CD8-positive, alpha-beta T cell (primary cell): ENCODE measurements at regions of chr22 and their contacts with region 1.

Region 1: GRCh38 chr22:30159561-30160353 is 79.5 kb downstream of the HORMAD2 start:
- DNase-seq: no peak
- ATAC-seq: no peak
- H3K4me3 ChIP-seq: no peak overlapping the region
- H3K4me3 Mint-ChIP-seq: no peak overlapping the region
- H3K27ac ChIP-seq: no peak overlapping the region
- H3K27ac Mint-ChIP-seq: no peak overlapping the region
- H3K4me1 ChIP-seq: no peaks in the 10 kb centered on the region
- H3K4me1 Mint-ChIP-seq: peaks cover 6% of the 10 kb centered on the region
- H3K27me3 ChIP-seq: no peaks in the 10 kb centered on the region
- H3K27me3 Mint-ChIP-seq: no peaks in the 10 kb centered on the region
- CTCF ChIP-seq: no peak

Region 2: GRCh38 chr22:30089655-30089974 is 70.1 kb before region 1 on chr22:
- CTCF ChIA-PET with region 1: no interaction called
- POLR2A ChIA-PET with region 1: no interaction called
- intact Hi-C with region 1: no loop called
- DNase-seq: no peak
- ATAC-seq: no peak
- H3K4me3 ChIP-seq: no peak overlapping the region
- H3K4me3 Mint-ChIP-seq: no peak overlapping the region
- H3K27ac ChIP-seq: no peak overlapping the region
- H3K27ac Mint-ChIP-seq: no peak overlapping the region
- H3K4me1 ChIP-seq: peaks cover 5% of the 10 kb centered on the region
- H3K4me1 Mint-ChIP-seq: peaks cover 7% of the 10 kb centered on the region
- H3K27me3 ChIP-seq: no peaks in the 10 kb centered on the region
- H3K27me3 Mint-ChIP-seq: peaks cover 15% of the 10 kb centered on the region
- CTCF ChIP-seq: no peak

Region 3: DNA sequence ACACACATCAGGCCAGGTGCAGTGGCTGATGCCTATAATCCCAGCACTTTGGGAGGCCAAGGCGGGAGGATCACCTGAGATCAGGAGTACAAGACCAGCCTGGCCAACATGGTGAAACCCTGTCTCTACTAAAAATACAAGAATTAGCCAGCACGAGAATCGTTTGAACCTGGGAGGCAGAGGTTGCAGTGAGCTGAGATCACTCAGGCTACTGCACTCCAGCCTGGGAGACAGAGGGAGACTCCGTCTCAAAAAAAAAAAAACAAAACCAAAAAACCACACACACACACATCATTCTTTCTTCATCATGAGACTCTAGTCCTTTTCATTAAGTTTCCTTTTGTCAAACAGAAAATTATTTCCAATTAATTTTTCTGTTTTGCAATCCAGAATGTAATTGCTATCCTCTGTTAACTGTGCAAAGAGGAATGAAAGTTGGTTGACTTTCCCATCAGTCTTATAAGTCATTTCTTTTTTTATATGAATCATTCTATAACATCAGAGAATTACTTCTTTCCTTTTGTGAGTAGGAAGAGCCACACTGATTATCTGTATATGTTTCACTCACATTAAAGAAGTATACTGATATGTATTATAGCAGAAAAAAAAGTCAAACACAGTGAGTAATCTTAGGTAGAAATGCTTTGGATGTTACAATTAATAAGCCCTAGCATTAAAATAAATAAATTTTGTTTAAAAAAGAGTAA is 27.3 kb before region 1 on chr22:
- CTCF ChIA-PET with region 1: no interaction called
- POLR2A ChIA-PET with region 1: no interaction called
- intact Hi-C with region 1: no loop called
- DNase-seq: no peak
- ATAC-seq: no peak
- H3K4me3 ChIP-seq: no peak overlapping the region
- H3K4me3 Mint-ChIP-seq: no peak overlapping the region
- H3K27ac ChIP-seq: no peak overlapping the region
- H3K27ac Mint-ChIP-seq: no peak overlapping the region
- H3K4me1 ChIP-seq: no peaks in the 10 kb centered on the region
- H3K4me1 Mint-ChIP-seq: no peaks in the 10 kb centered on the region
- H3K27me3 ChIP-seq: no peaks in the 10 kb centered on the region
- H3K27me3 Mint-ChIP-seq: peaks cover 5% of the 10 kb centered on the region
- CTCF ChIP-seq: no peak

Region 4: GRCh38 chr22:30188911-30189310 is 29.2 kb after region 1 on chr22:
- CTCF ChIA-PET with region 1: no interaction called
- POLR2A ChIA-PET with region 1: no interaction called
- intact Hi-C with region 1: loop called in 1 of 2 experiments (anchors 1 kb)
- DNase-seq: no peak
- ATAC-seq: no peak
- H3K4me3 ChIP-seq: no peak overlapping the region
- H3K4me3 Mint-ChIP-seq: no peak overlapping the region
- H3K27ac ChIP-seq: no peak overlapping the region
- H3K27ac Mint-ChIP-seq: no peak overlapping the region
- H3K4me1 ChIP-seq: peaks cover 8% of the 10 kb centered on the region
- H3K4me1 Mint-ChIP-seq: peaks cover 25% of the 10 kb centered on the region
- H3K27me3 ChIP-seq: no peaks in the 10 kb centered on the region
- H3K27me3 Mint-ChIP-seq: no peaks in the 10 kb centered on the region
- CTCF ChIP-seq: no peak